ENCODE measurements at regions of chr2 and their contacts with region 1.

Region 1: GRCh38 chr2:23505218-23505983 is 120.4 kb downstream of the KLHL29 start:
- DNase-seq: no peak
- H3K4me3 ChIP-seq: no peak overlapping the region
- H3K27ac ChIP-seq: peak overlapping the region in 1 of 4 donors; percentile 43
- H3K4me1 ChIP-seq: peaks cover 0 to 11% (median 7%) of the 10 kb centered on the region in 4 donors
- H3K27me3 ChIP-seq: no peaks in the 10 kb centered on the region
- CTCF ChIP-seq: no peak
- EP300 ChIP-seq: no peak
- POLR2A ChIP-seq: no peak

Region 2: GRCh38 chr2:23449413-23449812 is 56.0 kb before region 1 on chr2:
- in situ Hi-C with region 1: no loop called
- intact Hi-C with region 1: loop called (anchors 10 kb)
- DNase-seq: no peak
- H3K4me3 ChIP-seq: no peak overlapping the region
- H3K27ac ChIP-seq: no peak overlapping the region
- H3K4me1 ChIP-seq: peaks cover 2 to 18% (median 14%) of the 10 kb centered on the region in 4 donors
- H3K27me3 ChIP-seq: no peaks in the 10 kb centered on the region
- CTCF ChIP-seq: no peak
- EP300 ChIP-seq: no peak
- POLR2A ChIP-seq: no peak